Left colon (tissue), 2 donors: ENCODE measurements at regions of chr22 and their contacts with region 1.

Region 1: DNA sequence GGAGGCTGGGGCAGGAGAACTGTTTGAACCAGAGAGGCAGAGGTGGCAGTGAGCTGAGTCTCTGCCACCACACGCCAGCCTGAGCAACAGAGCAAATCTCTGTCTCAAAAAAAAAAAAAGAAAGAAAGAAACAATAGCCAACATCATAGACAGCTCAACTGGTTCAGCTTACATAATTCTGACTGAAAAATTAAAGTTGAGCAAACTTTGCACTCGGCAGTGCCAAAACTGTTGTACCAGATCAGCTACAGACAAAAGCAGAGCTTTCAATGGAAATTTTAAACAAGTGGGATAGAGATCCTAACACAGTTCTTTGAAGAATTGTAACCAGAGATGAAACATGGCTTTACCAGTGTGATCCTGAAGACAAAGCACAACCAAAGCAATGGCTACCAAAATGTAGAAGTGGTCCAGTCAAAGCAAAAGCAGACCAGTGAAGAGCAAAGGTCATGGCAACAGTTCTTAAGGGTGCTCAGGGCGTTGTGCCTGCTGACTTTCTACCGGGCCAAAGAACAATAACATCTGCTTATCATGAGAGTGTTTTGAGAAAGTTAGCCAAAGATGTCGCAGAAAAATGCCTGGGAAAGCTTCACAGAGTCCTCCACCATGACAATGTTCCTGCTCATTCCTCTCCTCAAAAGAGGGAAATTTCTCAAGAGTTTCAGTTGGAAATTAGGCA is 59.3 kb downstream of the TTC28 start:
- DNase-seq: no peak
- ATAC-seq: no peak

Region 2: GRCh38 chr22:28488825-28489224 is 131.6 kb before region 1 on chr22:
- intact Hi-C with region 1: no loop called
- DNase-seq: no peak
- ATAC-seq: no peak

Region 3: DNA sequence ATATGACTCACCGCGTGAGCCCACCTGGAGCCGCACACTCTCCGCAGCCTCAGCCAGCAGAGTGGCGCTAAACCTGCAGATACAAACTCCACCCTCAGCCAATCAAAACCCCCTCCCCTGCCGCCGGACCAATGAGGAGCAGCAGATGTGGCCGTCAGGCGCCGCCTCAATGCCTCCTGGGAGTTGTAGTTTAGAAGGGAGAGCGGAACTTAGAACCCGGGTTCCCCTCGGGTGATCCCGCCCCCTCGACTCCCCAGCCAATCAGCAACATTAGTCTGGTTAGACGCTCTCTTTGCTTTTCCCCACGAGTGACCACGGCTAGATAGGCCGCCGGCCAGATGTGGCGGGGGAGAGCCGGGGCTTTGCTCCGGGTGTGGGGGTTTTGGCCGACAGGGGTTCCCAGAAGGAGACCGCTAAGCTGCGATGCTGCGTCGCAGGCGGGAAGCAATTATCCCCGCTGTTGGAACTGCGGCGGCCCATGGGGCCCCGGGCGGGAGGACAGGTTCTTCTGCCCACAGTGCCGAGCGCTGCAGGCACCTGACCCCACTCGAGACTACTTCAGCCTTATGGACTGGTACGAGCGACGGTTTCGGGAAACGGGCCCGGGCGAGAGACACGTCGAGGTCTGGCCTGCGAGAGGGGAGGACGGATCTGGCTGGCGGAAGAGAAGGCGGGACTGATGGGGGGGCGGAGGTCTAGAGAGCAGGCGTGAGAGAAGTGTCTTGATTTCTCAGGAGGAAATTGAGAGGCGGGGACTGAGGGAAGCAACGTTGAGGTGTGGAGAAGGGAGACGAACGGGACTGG is 121.6 kb after region 1 on chr22 and contains the starts of genes CHEK2 and HSCB:
- intact Hi-C with region 1: loop called in 1 of 2 experiments (anchors 5 kb)
- DNase-seq: peak; percentile 97 to 99
- ATAC-seq: peak; percentile 94
- total RNA-seq, gene CHEK2: 9.0 to 16.0 TPM
- total RNA-seq, gene HSCB: 10.9 to 12.8 TPM